Activated CD8-positive, alpha-beta T cell treated with anti-CD3 and anti-CD28 coated beads for 36 hours (primary cell): ENCODE measurements at regions of chr10 and their contacts with region 1.

Region 1: GRCh38 chr10:30392564-30392990 is 41.4 kb upstream of the MAP3K8 start:
- DNase-seq: peak; percentile 78
- ATAC-seq: peak; percentile 100
- H3K4me3 Mint-ChIP-seq: no peak overlapping the region
- H3K27ac Mint-ChIP-seq: no peak overlapping the region
- H3K4me1 Mint-ChIP-seq: peaks cover 3% of the 10 kb centered on the region
- H3K27me3 Mint-ChIP-seq: peaks cover 11% of the 10 kb centered on the region
- CTCF ChIP-seq: peak; percentile 88

Region 2: DNA sequence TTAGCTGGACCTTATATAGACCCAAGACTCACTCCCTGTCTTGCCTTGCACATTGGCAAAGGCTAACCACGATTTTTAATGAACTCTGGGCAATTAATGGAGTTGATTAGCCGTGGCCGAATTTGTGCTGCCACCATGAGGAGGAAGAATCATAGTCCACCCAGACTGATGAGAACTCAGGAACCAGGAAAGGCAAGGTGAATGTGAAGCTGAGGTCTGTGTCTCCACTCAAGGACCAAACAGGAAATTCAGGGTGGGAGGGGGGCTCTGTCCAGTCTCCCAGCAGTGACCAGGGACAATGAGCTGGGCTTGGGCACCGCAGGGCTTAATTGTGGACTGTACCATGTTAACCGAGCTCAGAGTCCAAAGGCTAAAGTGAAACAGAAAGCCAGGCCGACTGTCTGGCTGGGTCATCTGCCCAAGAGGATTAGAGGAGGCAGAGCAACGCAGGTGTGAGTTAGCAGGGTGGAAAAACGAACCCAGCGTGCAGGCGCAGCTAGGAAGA is 206.2 kb before region 1 on chr10:
- CTCF ChIA-PET with region 1: no interaction called
- POLR2A ChIA-PET with region 1: no interaction called
- intact Hi-C with region 1: no loop called
- DNase-seq: no peak
- ATAC-seq: no peak
- H3K4me3 Mint-ChIP-seq: no peak overlapping the region
- H3K27ac Mint-ChIP-seq: no peak overlapping the region
- H3K4me1 Mint-ChIP-seq: no peaks in the 10 kb centered on the region
- H3K27me3 Mint-ChIP-seq: no peaks in the 10 kb centered on the region
- CTCF ChIP-seq: no peak

Region 3: GRCh38 chr10:30378201-30379006 is 14.2 kb before region 1 on chr10:
- CTCF ChIA-PET with region 1: interaction called, 12 read pairs
- POLR2A ChIA-PET with region 1: no interaction called
- intact Hi-C with region 1: no loop called
- DNase-seq: no peak
- ATAC-seq: no peak
- H3K4me3 Mint-ChIP-seq: no peak overlapping the region
- H3K27ac Mint-ChIP-seq: no peak overlapping the region
- H3K4me1 Mint-ChIP-seq: peaks cover 5% of the 10 kb centered on the region
- H3K27me3 Mint-ChIP-seq: peaks cover 2% of the 10 kb centered on the region
- CTCF ChIP-seq: no peak

Region 4: GRCh38 chr10:30529373-30529998 is 136.9 kb after region 1 on chr10:
- CTCF ChIA-PET with region 1: interaction called, 42 read pairs
- POLR2A ChIA-PET with region 1: no interaction called
- intact Hi-C with region 1: loop called (anchors 2 kb)
- DNase-seq: peak; percentile 93
- ATAC-seq: peak; percentile 85
- H3K4me3 Mint-ChIP-seq: peak overlapping the region; percentile 75
- H3K27ac Mint-ChIP-seq: peak overlapping the region; percentile 96
- H3K4me1 Mint-ChIP-seq: peaks cover 62% of the 10 kb centered on the region
- H3K27me3 Mint-ChIP-seq: no peaks in the 10 kb centered on the region
- CTCF ChIP-seq: no peak

Region 5: DNA sequence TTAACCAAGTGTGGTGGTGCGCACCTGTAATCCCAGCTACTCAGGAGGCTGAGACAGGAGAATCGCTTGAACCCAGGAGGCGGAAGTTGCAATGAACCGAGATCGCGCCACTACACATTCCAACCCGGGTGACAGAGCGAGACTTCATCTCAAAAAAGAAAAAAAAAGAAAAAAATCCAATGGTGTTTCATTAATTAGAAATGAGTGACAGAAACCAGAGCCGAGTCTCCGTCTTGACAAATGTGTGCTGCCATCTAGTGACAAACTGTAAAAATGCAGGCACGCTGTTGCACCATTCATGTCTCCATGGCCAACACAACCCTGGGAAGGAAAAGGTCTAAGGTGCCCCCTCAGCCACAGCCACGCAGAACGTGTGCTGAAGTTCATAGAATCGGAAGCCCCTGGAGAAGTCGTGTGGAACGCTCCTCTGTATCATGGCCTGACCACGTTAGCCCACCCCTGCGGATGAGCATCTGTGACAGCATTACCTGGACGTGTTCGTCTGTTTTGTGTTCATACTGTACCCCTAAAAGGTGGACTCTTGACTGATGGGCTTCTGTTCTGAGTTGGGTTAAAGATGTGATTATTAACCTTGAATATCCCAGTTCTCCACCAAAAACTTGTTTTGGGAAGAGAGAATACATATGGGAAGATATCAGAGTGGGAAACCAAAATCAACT is 142.0 kb after region 1 on chr10:
- CTCF ChIA-PET with region 1: interaction called, 42 read pairs
- POLR2A ChIA-PET with region 1: interaction called, 3 read pairs
- intact Hi-C with region 1: loop called (anchors 2 kb)
- DNase-seq: peak; percentile 87
- ATAC-seq: peak; percentile 55
- H3K4me3 Mint-ChIP-seq: no peak overlapping the region
- H3K27ac Mint-ChIP-seq: no peak overlapping the region
- H3K4me1 Mint-ChIP-seq: peaks cover 29% of the 10 kb centered on the region
- H3K27me3 Mint-ChIP-seq: no peaks in the 10 kb centered on the region
- CTCF ChIP-seq: peak; percentile 90